ENCODE measurements at regions of chr14 and their contacts with region 1.

Region 1: DNA sequence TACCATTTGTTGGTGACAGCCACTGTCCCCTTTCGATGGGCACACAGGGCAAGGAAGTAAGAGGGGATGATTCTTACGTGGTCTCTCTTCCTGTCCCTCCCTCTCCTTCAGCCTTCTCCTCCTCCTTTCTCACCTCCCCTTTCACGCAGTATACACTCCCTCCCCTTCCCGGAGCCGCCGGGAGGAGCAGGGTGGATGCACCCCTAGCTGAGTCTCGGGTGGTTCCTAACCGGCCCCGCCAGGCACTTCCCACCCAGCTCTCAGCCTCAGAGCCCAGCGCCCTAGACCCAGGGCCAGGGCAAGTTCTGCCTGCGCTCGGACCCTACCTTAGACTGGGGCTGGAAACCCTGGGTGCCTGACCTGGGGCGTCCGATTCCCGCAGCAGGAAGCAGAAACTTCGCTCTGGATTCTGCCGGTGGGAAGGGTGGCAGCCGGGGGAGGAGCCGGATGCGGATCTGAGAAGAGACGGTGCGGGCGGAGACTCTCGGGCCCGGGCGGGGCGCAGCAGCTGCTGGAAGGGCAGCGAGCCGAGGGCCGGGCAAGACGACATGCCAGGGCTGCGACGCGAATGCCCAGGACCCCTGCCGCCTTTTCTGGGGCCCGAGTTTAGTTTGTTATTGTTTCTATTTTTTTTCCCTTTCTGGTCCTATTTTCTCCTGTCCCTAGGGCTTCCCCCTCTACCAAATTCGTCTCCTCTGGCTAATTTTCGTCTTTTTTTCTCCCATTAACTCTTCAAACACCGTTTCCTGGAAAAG is at the start of gene TEP1:
- DNase-seq: peak; percentile 82
- H3K4me3 Mint-ChIP-seq: peak within 1 kb of the TSS; percentile 85
- H3K27ac Mint-ChIP-seq: peak within 1 kb of the TSS; percentile 89
- H3K4me1 Mint-ChIP-seq: peaks cover 32% of the 10 kb centered on the region
- H3K27me3 Mint-ChIP-seq: no peaks in the 10 kb centered on the region
- total RNA-seq, gene TEP1: 34.3 to 37.0 TPM

Region 2: GRCh38 chr14:20332788-20333493 is 80.3 kb before region 1 on chr14 and contains the start of gene CCNB1IP1:
- CTCF ChIA-PET with region 1: interaction called, 10 read pairs
- intact Hi-C with region 1: loop called (anchors 1 kb)
- DNase-seq: peak; percentile 71
- H3K4me3 Mint-ChIP-seq: peak within 1 kb of the TSS; percentile 90
- H3K27ac Mint-ChIP-seq: peak within 1 kb of the TSS; percentile 92
- H3K4me1 Mint-ChIP-seq: peaks cover 38% of the 10 kb centered on the region
- H3K27me3 Mint-ChIP-seq: no peaks in the 10 kb centered on the region
- total RNA-seq, gene CCNB1IP1: 93.4 to 98.6 TPM

Region 3: DNA sequence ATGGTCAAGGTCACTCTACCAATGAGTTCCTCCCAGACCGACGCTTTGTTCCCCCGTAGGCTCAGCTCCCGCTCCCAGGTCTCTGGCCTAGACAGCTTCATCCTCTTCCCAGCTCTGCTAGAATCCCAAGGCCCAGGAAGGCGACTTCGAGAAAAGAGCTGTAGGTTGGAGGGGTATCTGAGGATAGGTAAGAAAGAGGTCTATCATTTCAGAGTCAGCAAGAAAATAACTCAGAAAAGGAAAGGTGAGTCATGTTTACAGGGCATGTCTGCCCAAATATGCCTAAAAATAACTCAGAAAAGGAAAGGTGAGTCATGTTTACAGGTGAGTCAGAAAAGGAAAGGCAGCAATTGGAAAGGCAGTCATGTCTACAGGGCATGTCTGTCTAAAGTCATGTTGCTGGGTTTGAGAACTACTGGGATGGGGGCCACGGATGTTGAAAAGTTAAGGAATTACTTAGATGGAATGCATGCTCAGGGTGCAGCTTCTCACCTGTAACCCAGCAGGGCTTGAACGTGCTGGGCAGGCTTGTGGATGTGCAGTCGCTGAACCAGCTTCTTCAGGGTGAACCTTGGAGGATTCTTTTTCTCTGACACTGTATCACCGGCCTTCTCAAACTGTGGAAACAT is 12.1 kb before region 1 on chr14:
- CTCF ChIA-PET with region 1: interaction called, 20 read pairs
- intact Hi-C with region 1: loop called (anchors 1 kb)
- DNase-seq: peak; percentile 43
- H3K4me3 Mint-ChIP-seq: peak overlapping the region; percentile 56
- H3K27ac Mint-ChIP-seq: peak overlapping the region; percentile 98
- H3K4me1 Mint-ChIP-seq: peaks cover 28% of the 10 kb centered on the region
- H3K27me3 Mint-ChIP-seq: no peaks in the 10 kb centered on the region

Region 4: GRCh38 chr14:20440882-20441281 is 27.7 kb after region 1 on chr14:
- CTCF ChIA-PET with region 1: interaction called, 15 read pairs
- intact Hi-C with region 1: loop called (anchors 1 kb)
- DNase-seq: peak; percentile 70
- H3K4me3 Mint-ChIP-seq: peak overlapping the region; percentile 32
- H3K27ac Mint-ChIP-seq: peak overlapping the region; percentile 68
- H3K4me1 Mint-ChIP-seq: peaks cover 19% of the 10 kb centered on the region
- H3K27me3 Mint-ChIP-seq: no peaks in the 10 kb centered on the region

Region 5: GRCh38 chr14:20461274-20462001 is 48.2 kb after region 1 on chr14 and contains the start of gene PIP4P1:
- CTCF ChIA-PET with region 1: interaction called, 33 read pairs
- intact Hi-C with region 1: loop called (anchors 1 kb)
- DNase-seq: peak; percentile 99
- H3K4me3 Mint-ChIP-seq: peak within 1 kb of the TSS; percentile 92
- H3K27ac Mint-ChIP-seq: peak within 1 kb of the TSS; percentile 96
- H3K4me1 Mint-ChIP-seq: peaks cover 29% of the 10 kb centered on the region
- H3K27me3 Mint-ChIP-seq: no peaks in the 10 kb centered on the region
- total RNA-seq, gene PIP4P1: 31.6 to 32.3 TPM

Region 6: GRCh38 chr14:20477211-20477876 is 64.1 kb after region 1 on chr14:
- CTCF ChIA-PET with region 1: interaction called, 11 read pairs
- intact Hi-C with region 1: no loop called
- DNase-seq: peak; percentile 41
- H3K4me3 Mint-ChIP-seq: peak overlapping the region; percentile 19
- H3K27ac Mint-ChIP-seq: peak overlapping the region; percentile 92
- H3K4me1 Mint-ChIP-seq: peaks cover 58% of the 10 kb centered on the region
- H3K27me3 Mint-ChIP-seq: no peaks in the 10 kb centered on the region

Region 7: GRCh38 chr14:20873370-20874177 is 460.4 kb after region 1 on chr14:
- CTCF ChIA-PET with region 1: no interaction called
- intact Hi-C with region 1: no loop called
- DNase-seq: peak; percentile 93
- H3K4me3 Mint-ChIP-seq: peak overlapping the region; percentile 34
- H3K27ac Mint-ChIP-seq: no peak overlapping the region
- H3K4me1 Mint-ChIP-seq: peaks cover 10% of the 10 kb centered on the region
- H3K27me3 Mint-ChIP-seq: peaks cover 6% of the 10 kb centered on the region

Measured in activated naive CD4-positive, alpha-beta T cell treated with anti-CD3 and anti-CD28 coated beads for 36 hours (primary cell).